Activated CD4-positive, alpha-beta T cell treated with anti-CD3 and anti-CD28 coated beads for 36 hours (primary cell): ENCODE measurements at regions of chr4 and their contacts with region 1.

Region 1: GRCh38 chr4:48103483-48104139 is 30.4 kb downstream of the TXK start:
- DNase-seq: peak; percentile 44
- ATAC-seq: peak; percentile 92
- H3K4me3 Mint-ChIP-seq: no peak overlapping the region
- H3K27ac Mint-ChIP-seq: peak overlapping the region; percentile 89
- H3K4me1 Mint-ChIP-seq: peaks cover 38% of the 10 kb centered on the region
- H3K27me3 Mint-ChIP-seq: no peaks in the 10 kb centered on the region

Region 2: GRCh38 chr4:47642985-47643760 is 460.4 kb before region 1 on chr4:
- CTCF ChIA-PET with region 1: no interaction called
- POLR2A ChIA-PET with region 1: no interaction called
- intact Hi-C with region 1: no loop called
- DNase-seq: no peak
- ATAC-seq: no peak
- H3K4me3 Mint-ChIP-seq: no peak overlapping the region
- H3K27ac Mint-ChIP-seq: no peak overlapping the region
- H3K4me1 Mint-ChIP-seq: no peaks in the 10 kb centered on the region
- H3K27me3 Mint-ChIP-seq: peaks cover 2% of the 10 kb centered on the region

Region 3: DNA sequence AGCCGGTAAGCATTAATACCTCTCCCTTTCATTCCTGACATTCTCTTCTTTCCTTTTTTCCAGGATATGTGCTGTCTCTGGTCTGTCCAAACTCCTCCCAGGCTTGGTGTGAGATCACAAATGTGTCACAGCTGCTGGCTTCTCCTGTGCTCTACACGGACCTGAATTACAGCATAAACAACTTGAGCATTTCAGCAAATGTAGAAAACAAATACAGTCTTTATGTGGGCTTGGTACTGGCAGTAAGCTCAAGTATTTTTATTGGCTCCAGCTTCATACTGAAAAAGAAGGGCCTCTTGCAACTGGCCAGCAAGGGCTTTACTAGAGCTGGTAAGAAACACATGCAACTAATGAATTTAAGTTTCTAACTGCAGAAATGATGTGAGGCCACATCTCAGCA is 78.6 kb before region 1 on chr4:
- CTCF ChIA-PET with region 1: interaction called, 3 read pairs
- POLR2A ChIA-PET with region 1: no interaction called
- intact Hi-C with region 1: loop called in 1 of 2 experiments (anchors 2 kb)
- DNase-seq: no peak
- ATAC-seq: no peak
- H3K4me3 Mint-ChIP-seq: no peak overlapping the region
- H3K27ac Mint-ChIP-seq: no peak overlapping the region
- H3K4me1 Mint-ChIP-seq: peaks cover 38% of the 10 kb centered on the region
- H3K27me3 Mint-ChIP-seq: peaks cover 11% of the 10 kb centered on the region

Region 4: GRCh38 chr4:48071121-48071612 is 32.4 kb before region 1 on chr4:
- CTCF ChIA-PET with region 1: no interaction called
- POLR2A ChIA-PET with region 1: no interaction called
- intact Hi-C with region 1: no loop called
- DNase-seq: no peak
- ATAC-seq: no peak
- H3K4me3 Mint-ChIP-seq: no peak overlapping the region
- H3K27ac Mint-ChIP-seq: no peak overlapping the region
- H3K4me1 Mint-ChIP-seq: peaks cover 7% of the 10 kb centered on the region
- H3K27me3 Mint-ChIP-seq: no peaks in the 10 kb centered on the region

Region 5: DNA sequence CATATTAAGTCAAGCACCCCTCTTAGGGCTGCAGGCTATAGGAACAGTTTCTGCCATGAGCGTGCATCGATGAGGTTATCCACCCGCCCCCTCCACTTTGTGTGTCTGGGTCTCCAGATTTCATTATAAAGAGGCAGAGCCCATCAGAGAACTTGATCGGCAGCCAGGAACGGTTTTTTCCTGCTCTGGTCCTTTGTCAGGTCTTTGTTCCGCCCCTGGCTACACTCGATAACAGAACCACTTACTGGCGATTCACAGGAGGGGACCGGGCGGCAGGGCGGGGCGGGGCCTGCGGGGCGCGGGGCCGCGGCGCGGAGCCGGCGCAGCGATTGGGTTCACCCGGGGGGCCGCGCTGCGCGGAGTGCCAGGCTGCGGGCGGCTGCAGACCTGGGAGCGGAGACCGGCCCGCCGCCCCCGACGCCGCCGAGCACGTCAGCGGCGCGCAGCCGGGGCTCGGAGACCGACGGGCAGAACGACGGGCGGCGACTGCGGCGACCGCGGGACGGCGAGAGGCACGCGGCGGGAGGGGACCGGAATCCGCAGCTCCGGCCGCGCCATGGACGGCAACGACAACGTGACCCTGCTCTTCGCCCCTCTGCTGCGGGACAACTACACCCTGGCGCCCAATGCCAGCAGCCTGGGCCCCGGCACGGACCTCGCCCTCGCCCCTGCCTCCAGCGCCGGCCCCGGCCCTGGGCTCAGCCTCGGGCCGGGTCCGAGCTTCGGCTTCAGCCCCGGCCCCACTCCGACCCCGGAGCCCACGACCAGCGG is 379.6 kb after region 1 on chr4 and contains the start of gene SLC10A4:
- CTCF ChIA-PET with region 1: no interaction called
- POLR2A ChIA-PET with region 1: no interaction called
- intact Hi-C with region 1: no loop called
- DNase-seq: peak; percentile 31
- ATAC-seq: peak; percentile 42
- H3K4me3 Mint-ChIP-seq: peak within 1 kb of the TSS; percentile 38
- H3K27ac Mint-ChIP-seq: no peak within 1 kb of the TSS
- H3K4me1 Mint-ChIP-seq: peaks cover 7% of the 10 kb centered on the region
- H3K27me3 Mint-ChIP-seq: peaks cover 54% of the 10 kb centered on the region
- total RNA-seq, gene SLC10A4: not detected